CD4-positive, alpha-beta T cell (primary cell): ENCODE measurements at regions of chrX and their contacts with region 1.

Region 1: GRCh38 chrX:96764864-96765263 is 80.2 kb downstream of the DIAPH2 start:
- DNase-seq: peak in 1 of 14 experiments; percentile 11
- ATAC-seq: no peak
- H3K4me3 ChIP-seq: no peak overlapping the region
- H3K4me3 Mint-ChIP-seq: no peak overlapping the region
- H3K27ac ChIP-seq: no peak overlapping the region
- H3K27ac Mint-ChIP-seq: no peak overlapping the region
- H3K4me1 ChIP-seq: no peaks in the 10 kb centered on the region
- H3K4me1 Mint-ChIP-seq: peaks cover 6% of the 10 kb centered on the region
- H3K27me3 ChIP-seq: no peaks in the 10 kb centered on the region
- H3K27me3 Mint-ChIP-seq: no peaks in the 10 kb centered on the region
- CTCF ChIP-seq: no peak

Region 2: DNA sequence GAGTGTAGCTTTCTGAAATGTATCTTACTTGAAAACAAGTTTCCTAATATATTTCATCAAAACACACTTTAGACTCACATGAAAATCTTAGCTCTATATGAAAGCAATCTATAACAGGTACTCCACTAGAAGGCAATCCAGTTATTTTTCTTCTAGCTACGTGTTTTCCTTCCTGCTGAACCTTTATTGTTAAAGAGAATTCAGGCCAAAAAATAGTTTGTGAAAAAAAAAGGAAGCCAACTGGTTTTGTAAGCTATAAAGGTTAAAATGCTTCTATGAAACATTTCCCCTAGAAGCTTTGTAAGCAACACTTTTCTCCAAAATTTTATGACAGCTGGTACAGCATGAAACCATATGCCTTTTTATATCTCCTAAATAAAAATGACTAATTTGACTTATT is 384.9 kb before region 1 on chrX:
- CTCF ChIA-PET with region 1: no interaction called
- POLR2A ChIA-PET with region 1: no interaction called
- intact Hi-C with region 1: no loop called
- DNase-seq: no peak
- ATAC-seq: no peak
- H3K4me3 ChIP-seq: no peak overlapping the region
- H3K4me3 Mint-ChIP-seq: no peak overlapping the region
- H3K27ac ChIP-seq: no peak overlapping the region
- H3K27ac Mint-ChIP-seq: no peak overlapping the region
- H3K4me1 ChIP-seq: no peaks in the 10 kb centered on the region
- H3K4me1 Mint-ChIP-seq: no peaks in the 10 kb centered on the region
- H3K27me3 ChIP-seq: no peaks in the 10 kb centered on the region
- H3K27me3 Mint-ChIP-seq: no peaks in the 10 kb centered on the region
- CTCF ChIP-seq: no peak

Region 3: DNA sequence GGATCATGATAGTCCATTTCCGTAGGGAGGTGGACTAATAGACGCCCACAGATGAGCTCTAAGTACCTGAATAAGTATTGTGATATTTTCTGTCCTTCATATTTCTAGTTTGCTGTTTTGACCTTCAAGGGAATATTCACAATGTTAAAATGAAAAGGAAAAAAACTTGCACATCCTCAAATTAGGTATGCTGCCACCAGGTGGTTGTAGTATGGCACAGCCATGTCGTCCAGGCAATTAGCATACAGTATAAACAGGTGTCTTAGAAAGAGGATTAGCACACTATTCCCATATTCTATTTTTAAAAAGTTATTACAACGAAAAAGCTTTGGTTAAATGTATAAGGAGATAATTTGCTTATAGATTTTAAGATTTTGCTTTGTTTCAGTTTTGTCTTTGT is 920.9 kb after region 1 on chrX:
- CTCF ChIA-PET with region 1: no interaction called
- POLR2A ChIA-PET with region 1: no interaction called
- intact Hi-C with region 1: loop called in 1 of 2 experiments (anchors 10 kb)
- DNase-seq: peak in 3 of 14 experiments; percentile 15 to 24 (median 21)
- ATAC-seq: no peak
- H3K4me3 ChIP-seq: no peak overlapping the region
- H3K4me3 Mint-ChIP-seq: no peak overlapping the region
- H3K27ac ChIP-seq: no peak overlapping the region
- H3K27ac Mint-ChIP-seq: no peak overlapping the region
- H3K4me1 ChIP-seq: no peaks in the 10 kb centered on the region
- H3K4me1 Mint-ChIP-seq: no peaks in the 10 kb centered on the region
- H3K27me3 ChIP-seq: no peaks in the 10 kb centered on the region
- H3K27me3 Mint-ChIP-seq: peaks cover 4% of the 10 kb centered on the region
- CTCF ChIP-seq: peak; percentile 17